Activated CD8-positive, alpha-beta T cell treated with anti-CD3 and anti-CD28 coated beads for 36 hours (primary cell): ENCODE measurements at regions of chr1 and their contacts with region 1.

Region 1: DNA sequence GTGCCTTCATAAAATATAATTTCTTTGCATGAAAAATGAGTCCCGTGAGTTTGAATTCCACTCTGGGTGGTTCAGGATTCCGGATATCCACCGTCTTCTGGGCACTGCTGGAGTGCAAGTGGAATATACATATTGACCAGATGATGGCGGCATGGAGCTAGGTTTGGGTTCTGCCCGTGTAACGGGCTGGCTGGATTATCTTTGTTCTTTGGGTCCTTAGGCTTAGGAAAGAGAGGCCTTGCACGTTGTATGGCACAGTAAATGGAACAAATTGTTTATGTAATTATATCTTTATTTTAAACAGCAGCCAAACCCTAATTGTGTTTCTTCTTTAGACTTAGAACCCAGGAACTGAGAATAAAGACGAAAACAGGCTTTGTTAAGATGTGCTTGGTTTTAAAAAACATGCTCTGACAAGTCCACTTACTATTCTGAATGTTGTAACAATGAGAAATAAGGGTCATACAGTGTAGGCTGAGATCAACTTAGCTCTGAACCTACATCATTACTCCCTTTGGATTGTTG is 13.5 kb upstream of the ACBD6 start:
- DNase-seq: peak; percentile 69
- ATAC-seq: peak; percentile 99
- H3K4me3 Mint-ChIP-seq: no peak overlapping the region
- H3K27ac Mint-ChIP-seq: no peak overlapping the region
- H3K4me1 Mint-ChIP-seq: no peaks in the 10 kb centered on the region
- H3K27me3 Mint-ChIP-seq: peaks cover 5% of the 10 kb centered on the region
- CTCF ChIP-seq: peak; percentile 79

Region 2: GRCh38 chr1:180502360-180503273 is 13.3 kb before region 1 on chr1 and contains the start of gene ACBD6:
- CTCF ChIA-PET with region 1: interaction called, 78 read pairs
- POLR2A ChIA-PET with region 1: interaction called, 5 read pairs
- intact Hi-C with region 1: no loop called
- DNase-seq: peak; percentile 92
- ATAC-seq: peak; percentile 94
- H3K4me3 Mint-ChIP-seq: peak within 1 kb of the TSS; percentile 96
- H3K27ac Mint-ChIP-seq: peak within 1 kb of the TSS; percentile 97
- H3K4me1 Mint-ChIP-seq: peaks cover 24% of the 10 kb centered on the region
- H3K27me3 Mint-ChIP-seq: no peaks in the 10 kb centered on the region
- CTCF ChIP-seq: no peak
- total RNA-seq, gene ACBD6: 41.3 to 45.0 TPM

Region 3: GRCh38 chr1:180533266-180533987 is 17.5 kb after region 1 on chr1:
- CTCF ChIA-PET with region 1: interaction called, 39 read pairs
- POLR2A ChIA-PET with region 1: no interaction called
- intact Hi-C with region 1: no loop called
- DNase-seq: peak; percentile 80
- ATAC-seq: peak; percentile 79
- H3K4me3 Mint-ChIP-seq: no peak overlapping the region
- H3K27ac Mint-ChIP-seq: no peak overlapping the region
- H3K4me1 Mint-ChIP-seq: no peaks in the 10 kb centered on the region
- H3K27me3 Mint-ChIP-seq: peaks cover 2% of the 10 kb centered on the region
- CTCF ChIP-seq: peak; percentile 80

Region 4: DNA sequence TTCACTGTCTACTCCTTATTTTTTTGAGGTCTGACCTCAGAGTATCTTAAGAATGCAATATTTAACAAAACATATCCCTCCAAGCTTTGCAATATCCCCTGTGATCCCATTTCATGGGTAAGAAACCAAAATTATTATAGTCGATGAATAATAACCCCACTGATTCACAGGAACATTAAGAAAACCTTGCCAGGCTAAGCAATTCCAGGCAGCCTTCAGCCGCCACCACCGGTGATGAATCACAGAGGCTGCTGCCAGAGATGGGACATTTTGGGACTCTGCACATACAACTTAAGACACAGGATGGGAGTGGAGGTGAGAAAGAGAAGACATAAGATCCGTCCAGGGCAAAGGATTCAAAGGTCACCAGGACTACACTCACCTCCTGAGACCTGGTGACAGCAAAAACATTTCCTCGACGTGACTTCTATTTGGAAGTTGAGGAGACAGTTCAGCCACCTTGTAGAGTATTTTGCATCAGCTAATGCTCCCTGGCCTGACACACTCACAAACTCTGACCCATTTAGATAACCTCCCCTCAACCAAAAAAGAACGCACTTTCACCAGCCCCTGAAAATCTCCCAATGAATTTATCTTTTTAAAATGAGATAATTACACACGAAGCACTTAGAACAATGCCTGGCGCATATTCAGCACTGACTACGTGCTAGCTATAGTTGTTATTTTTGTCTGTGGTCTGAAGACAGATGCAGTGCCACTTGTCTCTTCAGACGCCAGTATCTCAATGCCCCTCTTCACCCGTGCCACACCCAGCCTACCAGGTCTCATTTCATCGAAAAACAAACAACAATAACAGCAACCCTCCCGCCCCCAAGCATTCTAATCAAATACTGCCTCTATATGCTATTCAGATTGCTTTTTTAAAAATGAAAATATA is 25.0 kb after region 1 on chr1:
- CTCF ChIA-PET with region 1: interaction called, 26 read pairs
- POLR2A ChIA-PET with region 1: no interaction called
- intact Hi-C with region 1: no loop called
- DNase-seq: no peak
- ATAC-seq: no peak
- H3K4me3 Mint-ChIP-seq: no peak overlapping the region
- H3K27ac Mint-ChIP-seq: no peak overlapping the region
- H3K4me1 Mint-ChIP-seq: no peaks in the 10 kb centered on the region
- H3K27me3 Mint-ChIP-seq: peaks cover 2% of the 10 kb centered on the region
- CTCF ChIP-seq: no peak

Region 5: GRCh38 chr1:180631766-180632325 is 115.9 kb after region 1 on chr1 and contains the start of gene XPR1:
- CTCF ChIA-PET with region 1: interaction called, 8 read pairs
- POLR2A ChIA-PET with region 1: no interaction called
- intact Hi-C with region 1: loop called (anchors 10 kb)
- DNase-seq: peak; percentile 99
- ATAC-seq: peak; percentile 99
- H3K4me3 Mint-ChIP-seq: no peak within 1 kb of the TSS
- H3K27ac Mint-ChIP-seq: peak within 1 kb of the TSS; percentile 85
- H3K4me1 Mint-ChIP-seq: peaks cover 12% of the 10 kb centered on the region
- H3K27me3 Mint-ChIP-seq: no peaks in the 10 kb centered on the region
- CTCF ChIP-seq: no peak
- total RNA-seq, gene XPR1: 12.8 to 14.4 TPM

Region 6: GRCh38 chr1:180863158-180863775 is 347.3 kb after region 1 on chr1:
- CTCF ChIA-PET with region 1: interaction called, 107 read pairs
- POLR2A ChIA-PET with region 1: no interaction called
- intact Hi-C with region 1: loop called (anchors 5 kb)
- DNase-seq: peak; percentile 22
- ATAC-seq: no peak
- H3K4me3 Mint-ChIP-seq: no peak overlapping the region
- H3K27ac Mint-ChIP-seq: no peak overlapping the region
- H3K4me1 Mint-ChIP-seq: no peaks in the 10 kb centered on the region
- H3K27me3 Mint-ChIP-seq: no peaks in the 10 kb centered on the region
- CTCF ChIP-seq: peak; percentile 94